ENCODE measurements at regions of chr18 and their contacts with region 1.

Region 1: DNA sequence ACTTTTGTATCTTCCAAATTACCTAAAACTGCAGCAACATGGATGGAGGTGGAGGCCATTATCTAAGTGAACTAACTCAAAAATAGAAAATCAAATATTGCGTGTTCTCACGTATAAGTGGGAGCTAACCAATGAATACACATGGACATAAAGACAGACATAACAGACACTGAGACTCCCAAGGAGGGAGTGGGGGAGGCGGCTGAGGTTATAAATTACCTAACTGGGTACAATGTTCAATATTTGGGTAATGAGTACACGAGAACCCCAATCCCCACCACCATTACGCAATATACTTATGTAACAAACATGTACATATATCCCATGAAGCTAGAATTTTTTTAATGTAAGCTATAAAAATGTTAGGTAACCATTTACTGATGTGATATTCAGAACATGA is 119.8 kb downstream of the RTTN start:
- DNase-seq: no peak
- H3K4me3 ChIP-seq: no peak overlapping the region
- H3K27ac ChIP-seq: no peak overlapping the region
- H3K4me1 ChIP-seq: no peaks in the 10 kb centered on the region
- H3K27me3 ChIP-seq: no peaks in the 10 kb centered on the region
- CTCF ChIP-seq: no peak
- EP300 ChIP-seq: no peak
- POLR2A ChIP-seq: no peak

Region 2: DNA sequence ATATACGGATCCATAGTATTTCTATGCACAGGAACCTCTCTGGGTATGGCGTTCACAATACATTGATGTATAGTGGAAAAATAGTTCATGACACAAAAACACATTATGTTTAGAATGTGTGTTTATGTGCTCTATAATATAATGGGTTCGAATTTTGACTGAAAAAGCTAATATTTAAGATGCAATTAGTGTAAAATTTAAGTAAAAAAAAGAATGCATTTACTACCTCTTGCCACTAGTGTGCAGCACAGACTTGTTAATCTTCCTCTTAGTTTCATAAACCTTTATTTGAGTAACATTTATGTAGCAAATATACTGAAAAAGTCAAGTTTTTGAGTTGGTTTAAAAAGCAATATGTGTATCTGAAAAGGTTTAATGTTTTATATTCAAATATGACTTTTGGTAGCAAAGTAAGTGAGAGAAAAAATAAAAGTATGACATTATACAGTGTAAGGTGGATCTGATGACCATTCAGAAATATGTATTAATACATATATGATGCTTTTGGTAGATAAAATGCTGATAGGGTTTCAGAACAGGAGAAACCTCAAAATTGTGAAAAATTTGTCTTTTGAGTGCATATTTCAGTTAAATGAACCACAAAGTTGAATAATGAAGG is 1238.3 kb before region 1 on chr18:
- intact Hi-C with region 1: loop called (anchors 5 kb)
- DNase-seq: no peak
- H3K4me3 ChIP-seq: no peak overlapping the region
- H3K27ac ChIP-seq: no peak overlapping the region
- H3K4me1 ChIP-seq: peaks cover 0 to 10% (median 2%) of the 10 kb centered on the region in 4 donors
- H3K27me3 ChIP-seq: no peaks in the 10 kb centered on the region
- CTCF ChIP-seq: peak; percentile 37 to 66 (median 49)
- EP300 ChIP-seq: no peak
- POLR2A ChIP-seq: no peak

Region 3: GRCh38 chr18:70322928-70323327 is 237.3 kb after region 1 on chr18:
- intact Hi-C with region 1: no loop called
- DNase-seq: no peak
- H3K4me3 ChIP-seq: no peak overlapping the region
- H3K27ac ChIP-seq: no peak overlapping the region
- H3K4me1 ChIP-seq: peaks cover 0 to 9% (median 1%) of the 10 kb centered on the region in 4 donors
- H3K27me3 ChIP-seq: no peaks in the 10 kb centered on the region
- CTCF ChIP-seq: no peak
- EP300 ChIP-seq: no peak
- POLR2A ChIP-seq: no peak